Activated CD4-positive, alpha-beta T cell treated with anti-CD3 and anti-CD28 coated beads for 36 hours (primary cell): ENCODE measurements at regions of chr6 and their contacts with region 1.

Region 1: GRCh38 chr6:109455502-109456282 is at the start of gene MICAL1:
- DNase-seq: peak; percentile 78
- ATAC-seq: peak; percentile 53
- H3K4me3 Mint-ChIP-seq: peak within 1 kb of the TSS; percentile 87
- H3K27ac Mint-ChIP-seq: peak within 1 kb of the TSS; percentile 92
- H3K4me1 Mint-ChIP-seq: peaks cover 58% of the 10 kb centered on the region
- H3K27me3 Mint-ChIP-seq: no peaks in the 10 kb centered on the region
- total RNA-seq, gene MICAL1: 25.1 to 26.3 TPM

Region 2: GRCh38 chr6:108874470-108875160 is 581.1 kb before region 1 on chr6:
- CTCF ChIA-PET with region 1: no interaction called
- POLR2A ChIA-PET with region 1: no interaction called
- intact Hi-C with region 1: no loop called
- DNase-seq: peak; percentile 79
- ATAC-seq: peak; percentile 87
- H3K4me3 Mint-ChIP-seq: peak overlapping the region; percentile 51
- H3K27ac Mint-ChIP-seq: peak overlapping the region; percentile 89
- H3K4me1 Mint-ChIP-seq: peaks cover 41% of the 10 kb centered on the region
- H3K27me3 Mint-ChIP-seq: peaks cover 8% of the 10 kb centered on the region

Region 3: GRCh38 chr6:109202409-109203284 is 253.0 kb before region 1 on chr6:
- CTCF ChIA-PET with region 1: no interaction called
- POLR2A ChIA-PET with region 1: no interaction called
- intact Hi-C with region 1: no loop called
- DNase-seq: peak; percentile 59
- ATAC-seq: peak; percentile 95
- H3K4me3 Mint-ChIP-seq: no peak overlapping the region
- H3K27ac Mint-ChIP-seq: peak overlapping the region; percentile 59
- H3K4me1 Mint-ChIP-seq: peaks cover 14% of the 10 kb centered on the region
- H3K27me3 Mint-ChIP-seq: no peaks in the 10 kb centered on the region

Region 4: DNA sequence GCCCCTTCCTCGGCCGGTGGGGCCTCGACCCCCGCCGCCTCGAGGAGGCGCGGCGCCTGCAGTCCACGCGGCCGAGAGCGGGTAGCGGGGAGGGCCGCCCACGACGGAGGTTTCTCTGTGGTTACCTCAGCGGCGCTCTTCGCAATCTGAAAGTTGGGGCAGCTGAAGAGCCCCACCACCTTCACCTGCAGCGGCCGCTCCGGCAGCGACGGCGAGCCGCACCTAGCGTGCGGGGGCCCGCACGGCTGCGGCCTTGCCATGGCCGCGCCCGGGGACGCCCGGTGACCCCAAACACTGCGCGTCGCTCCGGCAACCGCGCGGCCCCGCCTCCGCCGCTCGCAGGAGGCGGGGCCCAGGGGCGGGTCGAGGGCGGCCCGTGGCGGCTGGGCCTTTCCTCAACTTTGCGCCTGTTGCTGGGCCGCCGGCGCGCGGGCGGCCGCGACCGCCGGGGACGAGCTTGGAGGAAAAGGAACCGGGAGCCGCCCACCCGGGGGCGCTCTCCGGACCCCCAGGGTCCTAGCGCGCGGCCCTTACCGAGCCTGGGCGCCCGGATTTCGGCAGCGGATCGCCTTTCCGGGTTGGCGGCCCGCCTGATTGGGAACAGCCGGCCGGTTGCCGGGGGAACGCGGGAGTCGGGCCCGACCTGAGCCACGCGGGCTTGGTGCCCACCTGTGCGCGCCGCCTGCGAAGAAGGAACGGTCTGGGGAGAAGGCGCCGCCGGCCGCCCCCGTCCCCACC is 15.2 kb before region 1 on chr6 and contains the starts of genes PPIL6 and SMPD2:
- CTCF ChIA-PET with region 1: interaction called, 25 read pairs
- POLR2A ChIA-PET with region 1: interaction called, 6 read pairs
- intact Hi-C with region 1: loop called (anchors 1 kb)
- DNase-seq: peak; percentile 86
- ATAC-seq: peak; percentile 85
- H3K4me3 Mint-ChIP-seq: peak within 1 kb of the TSS; percentile 89
- H3K27ac Mint-ChIP-seq: peak within 1 kb of the TSS; percentile 85
- H3K4me1 Mint-ChIP-seq: peaks cover 18% of the 10 kb centered on the region
- H3K27me3 Mint-ChIP-seq: no peaks in the 10 kb centered on the region
- total RNA-seq, gene PPIL6: 0.09 TPM in 1 of 2 experiments, not detected in the other
- total RNA-seq, gene SMPD2: 7.5 to 9.5 TPM

Region 5: DNA sequence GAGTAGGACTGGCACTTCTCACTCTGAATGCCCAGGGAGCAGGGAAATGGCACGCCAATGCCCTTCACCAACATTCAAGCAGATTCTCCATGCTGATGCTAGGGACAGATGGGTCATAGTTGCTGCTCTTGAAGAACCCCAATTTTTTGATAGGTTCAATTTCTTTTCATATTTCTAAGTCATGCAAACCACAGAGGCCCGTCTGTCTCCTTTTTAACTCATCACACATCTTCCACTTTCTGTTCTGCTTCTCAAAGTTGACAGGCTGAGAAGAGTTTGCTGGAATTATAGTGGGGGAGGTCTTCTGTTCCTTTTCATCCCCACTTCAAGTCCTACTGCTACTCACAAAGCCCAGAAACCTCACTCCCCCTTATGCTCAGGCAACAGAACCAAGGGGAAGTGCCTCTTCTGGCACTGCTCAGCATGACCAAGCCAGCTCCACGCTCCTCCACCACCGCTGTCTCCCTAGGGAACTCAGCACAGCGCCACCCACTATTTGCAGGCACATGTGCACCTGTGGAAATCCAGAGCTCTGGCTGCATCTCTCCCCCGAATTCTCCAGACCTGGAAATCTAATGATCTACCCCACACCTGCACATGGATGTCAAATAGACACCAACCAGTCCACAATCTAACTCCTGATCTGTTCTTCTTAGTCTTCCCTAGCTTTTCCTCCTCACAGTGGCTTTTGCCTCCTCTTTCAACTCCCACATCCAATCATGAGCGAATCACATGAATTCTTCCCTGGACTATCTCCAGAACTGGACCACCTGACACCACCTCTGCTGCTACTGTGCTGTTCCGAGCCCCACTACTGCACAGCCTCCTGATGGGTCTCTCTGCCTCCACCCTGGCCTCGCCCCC is 16.7 kb after region 1 on chr6:
- CTCF ChIA-PET with region 1: interaction called, 4 read pairs
- POLR2A ChIA-PET with region 1: interaction called, 5 read pairs
- intact Hi-C with region 1: loop called in 1 of 2 experiments (anchors 2 kb)
- DNase-seq: peak; percentile 25
- ATAC-seq: peak; percentile 72
- H3K4me3 Mint-ChIP-seq: no peak overlapping the region
- H3K27ac Mint-ChIP-seq: peak overlapping the region; percentile 59
- H3K4me1 Mint-ChIP-seq: peaks cover 67% of the 10 kb centered on the region
- H3K27me3 Mint-ChIP-seq: no peaks in the 10 kb centered on the region

Region 6: GRCh38 chr6:109482905-109483735 is 27.4 kb after region 1 on chr6 and contains the start of gene ZBTB24:
- CTCF ChIA-PET with region 1: interaction called, 4 read pairs
- POLR2A ChIA-PET with region 1: interaction called, 9 read pairs
- intact Hi-C with region 1: loop called (anchors 1 to 2 kb)
- DNase-seq: peak; percentile 94
- ATAC-seq: peak; percentile 84
- H3K4me3 Mint-ChIP-seq: peak within 1 kb of the TSS; percentile 96
- H3K27ac Mint-ChIP-seq: peak within 1 kb of the TSS; percentile 94
- H3K4me1 Mint-ChIP-seq: peaks cover 43% of the 10 kb centered on the region
- H3K27me3 Mint-ChIP-seq: no peaks in the 10 kb centered on the region
- total RNA-seq, gene ZBTB24: 12.0 to 14.7 TPM